ENCODE measurements at regions of chr4 and their contacts with region 1.

Region 1: GRCh38 chr4:118888666-118889311 is at the start of gene SYNPO2:
- DNase-seq: no peak
- ATAC-seq: peak; percentile 92
- H3K4me3 ChIP-seq: peak within 1 kb of the TSS; percentile 59
- H3K27ac ChIP-seq: no peak within 1 kb of the TSS
- H3K4me1 ChIP-seq: no peaks in the 10 kb centered on the region
- H3K27me3 ChIP-seq: peaks cover 0 to 15% of the 10 kb centered on the region in 2 experiments; a peak in 2 of 4 replicates
- CTCF ChIP-seq: no peak
- EP300 ChIP-seq: no peak
- POLR2A ChIP-seq: no peak
- RAD21 ChIP-seq: no peak
- polyA plus RNA-seq, gene SYNPO2: 0.04 to 0.11 TPM

Region 2: DNA sequence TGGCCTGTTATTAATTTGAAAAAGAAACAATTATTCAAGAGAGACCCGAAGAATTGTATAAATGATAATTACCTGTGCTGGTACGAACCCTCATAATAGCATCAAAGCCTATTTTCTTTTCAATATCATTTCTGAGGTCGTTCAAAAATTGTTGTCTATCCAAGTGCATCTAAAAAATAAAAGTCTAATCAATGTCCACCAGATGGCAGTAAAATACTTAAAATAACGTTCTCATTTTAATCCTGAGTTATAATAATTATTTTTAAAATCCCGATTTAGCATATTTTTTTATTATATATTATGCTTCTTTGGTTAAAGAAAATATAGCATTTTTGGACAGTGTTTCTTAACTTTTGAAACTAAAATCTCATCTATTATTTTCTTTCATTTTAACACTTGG is 147.9 kb before region 1 on chr4:
- CTCF ChIA-PET with region 1: interaction called, 15 read pairs
- POLR2A ChIA-PET with region 1: no interaction called
- RAD21 ChIA-PET with region 1: interaction called, 6 read pairs
- SMC1A ChIA-PET with region 1: interaction called, 3 read pairs
- in situ Hi-C with region 1: no loop called
- intact Hi-C with region 1: no loop called
- DNase-seq: no peak
- ATAC-seq: no peak; the same call in 2 of the 3 replicates
- H3K4me3 ChIP-seq: no peak overlapping the region
- H3K27ac ChIP-seq: no peak overlapping the region
- H3K4me1 ChIP-seq: no peaks in the 10 kb centered on the region
- H3K27me3 ChIP-seq: no peaks in the 10 kb centered on the region
- CTCF ChIP-seq: no peak; a peak in 1 of 6 replicates
- EP300 ChIP-seq: no peak
- POLR2A ChIP-seq: no peak
- RAD21 ChIP-seq: peak; percentile 22; the same call in 1 of the 2 replicates

Measured in GM12878 (cell line).